Endothelial cell of umbilical vein (primary cell): ENCODE measurements at regions of chr7 and their contacts with region 1.

Region 1: GRCh38 chr7:33243319-33243881 is 114.0 kb downstream of the BBS9 start:
- DNase-seq: peak; percentile 65
- H3K4me3 ChIP-seq: no peak overlapping the region
- H3K27ac ChIP-seq: no peak overlapping the region
- H3K4me1 ChIP-seq: no peaks in the 10 kb centered on the region
- H3K27me3 ChIP-seq: no peaks in the 10 kb centered on the region
- CTCF ChIP-seq: peak; percentile 39 to 42
- POLR2A ChIP-seq: no peak

Region 2: DNA sequence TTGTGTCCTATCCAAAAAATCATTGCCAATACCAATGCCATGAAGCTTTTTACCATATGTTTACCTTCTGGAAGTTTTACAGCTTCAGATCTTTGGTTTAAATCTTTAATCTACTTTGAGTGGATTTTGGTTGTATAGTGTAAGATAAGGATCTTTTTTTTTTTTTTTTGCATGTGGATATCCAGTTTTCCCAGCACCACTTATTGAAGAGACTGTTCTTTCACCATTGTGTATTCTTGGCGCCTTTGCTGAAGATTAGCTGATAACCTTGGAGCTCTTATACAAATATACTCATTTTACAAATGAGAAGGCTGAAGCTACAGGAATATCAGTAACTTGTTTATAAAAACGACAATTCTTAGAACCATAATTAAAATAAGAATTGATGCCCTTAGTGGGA is 11.8 kb after region 1 on chr7:
- CTCF ChIA-PET with region 1: interaction called, 24 read pairs
- POLR2A ChIA-PET with region 1: no interaction called
- dilution Hi-C with region 1: no loop called
- intact Hi-C with region 1: no loop called
- DNase-seq: no peak
- H3K4me3 ChIP-seq: no peak overlapping the region
- H3K27ac ChIP-seq: no peak overlapping the region
- H3K4me1 ChIP-seq: no peaks in the 10 kb centered on the region
- H3K27me3 ChIP-seq: no peaks in the 10 kb centered on the region
- CTCF ChIP-seq: no peak
- POLR2A ChIP-seq: no peak

Region 3: DNA sequence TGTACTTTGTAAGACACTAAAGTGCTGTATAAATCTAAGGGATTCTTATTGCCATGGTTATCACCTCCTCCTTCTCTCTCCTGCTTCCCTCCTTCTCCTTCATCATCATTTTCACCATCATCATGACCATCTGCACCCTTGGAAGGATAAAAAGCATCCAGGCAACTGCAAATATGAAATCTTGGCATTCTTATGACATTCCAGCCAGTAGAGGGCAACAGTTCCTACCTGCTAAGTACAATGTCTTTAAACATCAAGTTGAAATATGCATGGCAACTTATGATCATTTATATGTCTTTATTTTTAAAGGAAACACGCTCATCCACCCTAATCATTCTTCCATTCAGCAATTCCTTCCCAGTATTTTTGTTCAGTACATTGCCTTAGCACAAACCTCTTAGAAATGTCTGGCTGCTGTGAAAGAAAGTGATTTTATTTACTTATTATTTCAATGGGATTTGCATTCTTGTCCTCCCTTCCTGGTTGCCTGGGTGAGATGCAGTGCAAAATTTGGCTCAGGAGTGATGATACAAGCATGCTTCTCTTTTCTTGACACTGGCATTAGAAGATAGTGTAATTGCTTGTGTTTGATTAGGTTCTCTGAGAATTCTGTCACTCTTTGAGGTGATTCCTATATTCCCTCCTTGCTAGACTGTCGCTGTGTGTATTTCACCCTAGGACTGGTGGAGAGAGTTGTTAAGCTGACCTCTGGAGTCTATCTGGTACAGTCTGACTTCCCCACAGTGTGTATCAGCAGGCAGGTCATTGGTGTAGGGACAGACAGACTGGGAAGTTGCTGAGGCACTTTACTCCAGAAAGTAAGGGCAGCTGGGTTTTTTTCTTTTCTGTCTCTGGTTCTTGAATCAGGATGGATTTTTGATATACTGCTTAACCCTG is 473.4 kb after region 1 on chr7:
- CTCF ChIA-PET with region 1: interaction called, 15 read pairs
- POLR2A ChIA-PET with region 1: no interaction called
- dilution Hi-C with region 1: no loop called
- intact Hi-C with region 1: loop called (anchors 2 kb)
- DNase-seq: peak; percentile 84
- H3K4me3 ChIP-seq: no peak overlapping the region
- H3K27ac ChIP-seq: no peak overlapping the region
- H3K4me1 ChIP-seq: peaks cover 9% of the 10 kb centered on the region
- H3K27me3 ChIP-seq: no peaks in the 10 kb centered on the region
- CTCF ChIP-seq: peak; percentile 61 to 68
- POLR2A ChIP-seq: no peak

Region 4: GRCh38 chr7:33757562-33758165 is 514.3 kb after region 1 on chr7:
- CTCF ChIA-PET with region 1: interaction called, 5 read pairs
- POLR2A ChIA-PET with region 1: no interaction called
- dilution Hi-C with region 1: no loop called
- intact Hi-C with region 1: loop called (anchors 5 kb)
- DNase-seq: peak; percentile 58
- H3K4me3 ChIP-seq: no peak overlapping the region
- H3K27ac ChIP-seq: no peak overlapping the region
- H3K4me1 ChIP-seq: peaks cover 8% of the 10 kb centered on the region
- H3K27me3 ChIP-seq: no peaks in the 10 kb centered on the region
- CTCF ChIP-seq: peak; percentile 31 to 35
- POLR2A ChIP-seq: no peak

Region 5: DNA sequence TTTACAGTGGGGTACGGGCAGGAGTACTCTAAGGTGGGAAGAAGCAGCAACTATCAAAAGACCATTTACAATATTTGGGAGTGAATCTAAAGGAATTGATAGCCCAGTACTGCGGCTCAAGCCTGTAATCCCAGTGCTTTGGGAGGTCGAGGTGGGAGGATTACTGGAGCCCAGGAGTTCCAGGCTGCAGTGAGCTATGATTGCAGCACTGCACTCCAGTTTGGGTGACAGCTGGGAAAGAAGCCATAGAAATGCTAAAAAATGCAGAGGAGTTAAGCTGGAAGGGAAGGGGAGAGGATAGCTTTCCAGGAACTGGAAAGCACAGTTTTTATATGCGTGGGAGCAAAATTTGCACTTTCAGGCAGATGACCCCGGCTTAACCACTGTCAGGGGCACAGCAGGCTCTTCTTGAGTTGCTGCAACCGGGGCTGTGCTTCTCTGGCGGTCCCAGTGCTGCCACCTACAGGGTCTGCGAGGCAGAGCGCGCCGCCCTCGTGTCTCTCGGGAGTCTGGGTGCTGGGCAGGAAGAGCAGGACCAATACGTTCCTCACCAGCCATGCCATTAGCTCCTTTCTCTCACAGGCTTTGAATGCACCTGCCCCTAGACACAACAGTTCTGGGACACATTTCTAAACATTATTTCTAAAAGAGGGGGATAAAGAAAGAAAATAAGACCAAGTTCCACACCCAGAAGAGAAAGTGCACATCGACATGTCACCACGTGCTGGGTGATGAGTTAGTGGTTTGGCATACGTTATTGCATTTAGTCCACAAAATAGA is 651.8 kb after region 1 on chr7:
- CTCF ChIA-PET with region 1: interaction called, 23 read pairs
- POLR2A ChIA-PET with region 1: no interaction called
- dilution Hi-C with region 1: no loop called
- intact Hi-C with region 1: loop called (anchors 1 kb)
- DNase-seq: peak; percentile 82
- H3K4me3 ChIP-seq: no peak overlapping the region
- H3K27ac ChIP-seq: no peak overlapping the region
- H3K4me1 ChIP-seq: no peaks in the 10 kb centered on the region
- H3K27me3 ChIP-seq: no peaks in the 10 kb centered on the region
- CTCF ChIP-seq: peak; percentile 86 to 98
- POLR2A ChIP-seq: no peak

Region 6: GRCh38 chr7:34091323-34091917 is 848.0 kb after region 1 on chr7:
- CTCF ChIA-PET with region 1: interaction called, 48 read pairs
- POLR2A ChIA-PET with region 1: no interaction called
- dilution Hi-C with region 1: no loop called
- intact Hi-C with region 1: loop called (anchors 1 kb)
- DNase-seq: peak; percentile 58
- H3K4me3 ChIP-seq: no peak overlapping the region
- H3K27ac ChIP-seq: no peak overlapping the region
- H3K4me1 ChIP-seq: no peaks in the 10 kb centered on the region
- H3K27me3 ChIP-seq: no peaks in the 10 kb centered on the region
- CTCF ChIP-seq: peak; percentile 44 to 52
- POLR2A ChIP-seq: no peak